CD4-positive, alpha-beta memory T cell (primary cell): ENCODE measurements at regions of chr1 and their contacts with region 1.

Region 1: DNA sequence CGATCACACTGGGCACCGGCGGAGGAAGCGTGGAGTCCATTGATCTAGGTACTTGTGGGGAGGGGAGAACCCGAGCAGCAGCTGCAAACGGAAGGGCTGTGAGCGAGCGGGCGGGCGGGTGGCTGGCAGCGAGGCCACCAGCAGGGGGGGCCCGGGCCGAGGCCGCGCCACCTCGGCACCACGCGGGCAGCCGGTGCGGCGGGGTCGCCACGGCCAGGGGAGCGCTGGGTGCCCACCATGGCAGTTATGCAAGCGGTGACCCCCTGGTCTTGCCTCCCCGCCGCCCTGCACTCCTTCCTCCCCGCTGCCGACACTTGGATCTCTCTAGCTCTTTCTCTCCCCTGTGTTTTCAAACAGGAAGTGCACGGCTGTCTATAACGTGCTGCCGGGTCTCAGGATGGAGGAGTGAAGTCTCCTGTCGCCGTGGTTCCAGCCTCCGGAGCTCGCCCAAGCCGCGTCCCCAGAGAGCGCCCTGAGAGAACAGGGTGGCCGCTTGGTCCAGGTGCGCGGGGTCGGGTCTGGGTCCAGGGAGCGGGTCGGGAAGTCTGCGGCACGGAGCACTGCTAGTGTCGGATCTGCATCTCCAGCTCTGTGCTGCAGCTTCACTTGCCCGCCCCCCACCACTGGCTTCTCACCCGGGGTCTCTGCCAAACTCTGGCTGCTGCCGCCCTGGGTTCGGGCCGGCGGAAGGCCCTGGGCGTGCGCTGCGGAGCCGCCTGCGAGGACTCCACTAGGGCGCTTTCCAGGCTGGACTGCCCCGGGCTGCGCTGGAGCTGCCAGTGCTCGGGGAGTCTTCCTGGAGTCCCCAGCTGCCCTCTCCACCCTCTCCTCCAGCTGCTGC is 22.7 kb downstream of the LRRC8D start:
- DNase-seq: peak; percentile 73 to 83 (median 79)
- H3K4me3 ChIP-seq: peak overlapping the region; percentile 87 to 89
- H3K4me3 Mint-ChIP-seq: peak overlapping the region; percentile 95 to 98 (median 97)
- H3K27ac ChIP-seq: peak overlapping the region; percentile 85
- H3K27ac Mint-ChIP-seq: peak overlapping the region; percentile 94 to 97 (median 97)
- H3K4me1 ChIP-seq: peaks cover 51% of the 10 kb centered on the region
- H3K4me1 Mint-ChIP-seq: peaks cover 30 to 81% (median 54%) of the 10 kb centered on the region in 4 donors
- H3K27me3 ChIP-seq: no peaks in the 10 kb centered on the region
- H3K27me3 Mint-ChIP-seq: no peaks in the 10 kb centered on the region

Region 2: DNA sequence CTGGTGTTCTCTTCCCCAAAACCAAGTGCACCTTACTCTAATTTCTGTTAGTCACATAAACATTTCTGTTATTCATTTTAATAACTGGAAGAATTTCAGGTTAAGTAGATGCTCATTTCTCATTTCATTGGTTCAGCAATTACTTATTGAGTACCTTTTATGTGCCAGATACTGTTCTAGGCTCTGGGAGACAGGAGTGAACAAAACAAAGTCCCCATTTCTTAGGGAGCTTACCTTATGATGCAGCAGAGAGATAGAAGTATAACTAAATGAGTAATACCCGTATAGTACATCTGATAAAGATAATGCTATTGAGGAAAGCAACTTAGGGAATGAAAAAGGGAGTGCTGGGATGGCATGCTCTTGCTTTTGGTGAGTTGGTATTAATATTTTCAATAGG is 176.9 kb before region 1 on chr1:
- CTCF ChIA-PET with region 1: no interaction called
- POLR2A ChIA-PET with region 1: no interaction called
- intact Hi-C with region 1: no loop called
- DNase-seq: no peak
- H3K4me3 ChIP-seq: no peak overlapping the region
- H3K4me3 Mint-ChIP-seq: peak overlapping the region in 5 of 8 donors; percentile 5 to 69 (median 52)
- H3K27ac ChIP-seq: no peak overlapping the region
- H3K27ac Mint-ChIP-seq: peak overlapping the region in 6 of 7 donors; percentile 11 to 80 (median 68)
- H3K4me1 ChIP-seq: peaks cover 76% of the 10 kb centered on the region
- H3K4me1 Mint-ChIP-seq: peaks cover 72 to 96% (median 80%) of the 10 kb centered on the region in 4 donors
- H3K27me3 ChIP-seq: no peaks in the 10 kb centered on the region
- H3K27me3 Mint-ChIP-seq: no peaks in the 10 kb centered on the region

Region 3: DNA sequence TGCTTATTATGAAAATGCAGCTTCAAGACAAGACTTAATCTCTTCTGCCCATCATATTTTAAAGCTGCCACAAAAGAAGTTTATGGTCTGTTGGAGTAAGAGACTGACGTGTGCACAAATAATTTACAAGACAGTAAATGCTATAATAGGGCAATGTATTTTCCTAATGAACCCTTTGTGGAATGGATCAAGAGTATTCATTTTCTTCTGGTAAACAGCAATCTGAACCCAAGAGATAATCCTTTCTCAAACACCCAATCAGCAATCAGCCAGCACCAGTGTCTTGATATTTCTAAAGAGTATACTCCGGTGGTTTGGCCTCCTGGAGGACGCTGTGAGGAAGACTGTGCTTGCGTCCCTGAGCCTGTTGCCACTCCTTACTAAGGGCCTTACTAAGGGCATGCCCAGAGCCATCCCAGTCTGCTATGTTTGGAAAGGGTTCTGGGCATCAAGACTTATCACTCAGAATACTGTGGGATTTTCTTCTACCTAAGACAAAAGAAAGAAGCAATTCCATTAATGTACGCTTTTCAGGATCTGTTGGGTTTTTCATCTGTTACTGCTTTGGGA is 71.4 kb before region 1 on chr1:
- CTCF ChIA-PET with region 1: no interaction called
- POLR2A ChIA-PET with region 1: no interaction called
- intact Hi-C with region 1: no loop called
- DNase-seq: no peak
- H3K4me3 ChIP-seq: no peak overlapping the region
- H3K4me3 Mint-ChIP-seq: no peak overlapping the region
- H3K27ac ChIP-seq: no peak overlapping the region
- H3K27ac Mint-ChIP-seq: no peak overlapping the region
- H3K4me1 ChIP-seq: peaks cover 11% of the 10 kb centered on the region
- H3K4me1 Mint-ChIP-seq: peaks cover 10 to 15% (median 12%) of the 10 kb centered on the region in 4 donors
- H3K27me3 ChIP-seq: no peaks in the 10 kb centered on the region
- H3K27me3 Mint-ChIP-seq: no peaks in the 10 kb centered on the region

Region 4: DNA sequence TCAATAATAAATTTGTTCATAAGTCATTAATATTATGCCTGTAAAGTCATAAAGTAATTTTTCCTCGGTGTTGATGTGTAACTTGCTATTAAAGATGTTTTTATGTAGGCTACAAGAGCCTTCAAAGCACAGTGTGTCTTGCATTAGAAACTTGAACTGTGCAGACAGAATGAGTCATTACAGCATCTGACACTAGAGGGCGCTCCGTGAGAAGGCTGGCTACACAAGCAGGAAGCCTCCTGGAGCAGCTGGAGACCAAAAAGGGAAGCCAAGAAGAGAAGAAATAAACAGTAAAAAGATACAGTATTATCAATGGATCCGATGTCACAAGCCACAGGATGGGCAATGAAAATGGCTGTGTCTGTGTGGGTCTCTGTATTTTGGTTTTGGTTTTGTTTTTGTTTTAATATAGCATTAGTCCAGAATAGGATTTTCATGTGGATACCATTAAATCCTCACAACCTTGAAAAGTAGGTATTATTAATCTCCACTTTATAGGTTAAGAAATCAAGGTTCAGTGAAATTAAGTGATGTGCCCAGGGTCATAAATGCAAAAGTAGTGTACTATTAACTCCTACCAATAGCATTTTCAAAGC is 38.8 kb before region 1 on chr1:
- CTCF ChIA-PET with region 1: interaction called, 7 read pairs
- POLR2A ChIA-PET with region 1: interaction called, 3 read pairs
- intact Hi-C with region 1: loop called (anchors 2 kb)
- DNase-seq: peak; percentile 73 to 81 (median 77)
- H3K4me3 ChIP-seq: no peak overlapping the region
- H3K4me3 Mint-ChIP-seq: no peak overlapping the region
- H3K27ac ChIP-seq: no peak overlapping the region
- H3K27ac Mint-ChIP-seq: no peak overlapping the region
- H3K4me1 ChIP-seq: peaks cover 4% of the 10 kb centered on the region
- H3K4me1 Mint-ChIP-seq: no peaks in the 10 kb centered on the region
- H3K27me3 ChIP-seq: no peaks in the 10 kb centered on the region
- H3K27me3 Mint-ChIP-seq: peaks cover 0 to 1% of the 10 kb centered on the region in 2 donors

Region 5: DNA sequence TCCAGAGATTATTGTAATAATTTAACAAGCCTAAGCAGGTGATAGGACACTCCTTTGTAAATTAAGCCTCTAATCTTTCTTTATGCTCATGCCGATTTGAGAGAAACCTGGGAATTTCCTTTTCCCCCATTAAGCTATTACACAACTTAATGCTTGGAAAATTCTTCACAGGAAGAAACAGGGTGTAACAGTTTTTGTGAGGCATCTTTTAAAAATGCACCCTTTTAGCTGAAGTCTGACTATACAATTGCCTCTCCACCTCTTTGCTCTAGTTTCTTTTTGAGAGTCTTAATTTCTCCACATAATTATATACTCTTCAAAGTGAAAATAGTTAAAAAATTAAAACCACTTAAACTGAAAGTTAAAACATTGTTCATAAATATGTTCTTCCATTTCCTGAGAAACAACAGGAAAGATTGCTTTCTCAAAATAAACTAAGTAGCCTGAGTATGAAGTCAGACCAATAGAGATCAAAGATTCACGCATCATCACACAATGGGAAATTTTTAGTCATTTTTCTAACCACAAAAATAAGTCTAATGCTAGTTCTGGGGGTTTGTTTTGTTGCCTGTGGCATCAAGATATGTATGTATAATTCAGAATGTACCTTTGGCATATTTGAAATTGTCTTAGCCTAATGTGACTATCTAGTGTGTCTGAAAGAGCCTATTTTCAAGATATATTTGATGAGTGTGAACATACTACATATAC is 12.1 kb after region 1 on chr1:
- CTCF ChIA-PET with region 1: interaction called, 39 read pairs
- POLR2A ChIA-PET with region 1: interaction called, 58 read pairs
- intact Hi-C with region 1: loop called (anchors 1 kb)
- DNase-seq: peak; percentile 65 to 82 (median 77)
- H3K4me3 ChIP-seq: peak overlapping the region in 1 of 2 donors; percentile 21
- H3K4me3 Mint-ChIP-seq: peak overlapping the region in 3 of 8 donors; percentile 74 to 82 (median 77)
- H3K27ac ChIP-seq: peak overlapping the region; percentile 65
- H3K27ac Mint-ChIP-seq: no peak overlapping the region
- H3K4me1 ChIP-seq: peaks cover 44% of the 10 kb centered on the region
- H3K4me1 Mint-ChIP-seq: peaks cover 11 to 22% (median 14%) of the 10 kb centered on the region in 4 donors
- H3K27me3 ChIP-seq: no peaks in the 10 kb centered on the region
- H3K27me3 Mint-ChIP-seq: peaks cover 0 to 1% of the 10 kb centered on the region in 2 donors

Region 6: DNA sequence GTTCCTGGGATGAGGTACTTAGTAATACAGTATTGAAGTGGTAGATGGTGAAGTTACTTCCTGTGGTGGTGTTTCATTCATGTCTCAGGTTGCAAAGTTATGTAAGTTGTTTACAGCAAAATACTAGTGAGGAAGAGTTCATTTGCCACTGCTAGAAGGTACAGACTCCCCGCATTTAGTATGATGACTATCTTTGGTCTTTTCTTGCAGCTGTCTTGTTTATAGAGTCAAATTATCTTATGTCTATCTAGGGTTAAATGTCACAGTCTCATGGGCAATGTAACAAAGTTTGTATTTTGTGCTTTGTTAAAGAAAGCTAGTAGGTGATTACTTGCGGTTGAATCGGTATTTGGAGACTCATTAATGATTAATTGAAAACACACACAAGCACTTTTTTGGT is 27.5 kb after region 1 on chr1:
- CTCF ChIA-PET with region 1: interaction called, 14 read pairs
- POLR2A ChIA-PET with region 1: interaction called, 25 read pairs
- intact Hi-C with region 1: loop called (anchors 2 kb)
- DNase-seq: peak in 4 of 5 donors; percentile 54 to 68 (median 60)
- H3K4me3 ChIP-seq: no peak overlapping the region
- H3K4me3 Mint-ChIP-seq: peak overlapping the region in 7 of 8 donors; percentile 18 to 76 (median 44)
- H3K27ac ChIP-seq: no peak overlapping the region
- H3K27ac Mint-ChIP-seq: peak overlapping the region; percentile 67 to 96 (median 94)
- H3K4me1 ChIP-seq: peaks cover 55% of the 10 kb centered on the region
- H3K4me1 Mint-ChIP-seq: peaks cover 49 to 79% (median 60%) of the 10 kb centered on the region in 4 donors
- H3K27me3 ChIP-seq: no peaks in the 10 kb centered on the region
- H3K27me3 Mint-ChIP-seq: no peaks in the 10 kb centered on the region

Region 7: DNA sequence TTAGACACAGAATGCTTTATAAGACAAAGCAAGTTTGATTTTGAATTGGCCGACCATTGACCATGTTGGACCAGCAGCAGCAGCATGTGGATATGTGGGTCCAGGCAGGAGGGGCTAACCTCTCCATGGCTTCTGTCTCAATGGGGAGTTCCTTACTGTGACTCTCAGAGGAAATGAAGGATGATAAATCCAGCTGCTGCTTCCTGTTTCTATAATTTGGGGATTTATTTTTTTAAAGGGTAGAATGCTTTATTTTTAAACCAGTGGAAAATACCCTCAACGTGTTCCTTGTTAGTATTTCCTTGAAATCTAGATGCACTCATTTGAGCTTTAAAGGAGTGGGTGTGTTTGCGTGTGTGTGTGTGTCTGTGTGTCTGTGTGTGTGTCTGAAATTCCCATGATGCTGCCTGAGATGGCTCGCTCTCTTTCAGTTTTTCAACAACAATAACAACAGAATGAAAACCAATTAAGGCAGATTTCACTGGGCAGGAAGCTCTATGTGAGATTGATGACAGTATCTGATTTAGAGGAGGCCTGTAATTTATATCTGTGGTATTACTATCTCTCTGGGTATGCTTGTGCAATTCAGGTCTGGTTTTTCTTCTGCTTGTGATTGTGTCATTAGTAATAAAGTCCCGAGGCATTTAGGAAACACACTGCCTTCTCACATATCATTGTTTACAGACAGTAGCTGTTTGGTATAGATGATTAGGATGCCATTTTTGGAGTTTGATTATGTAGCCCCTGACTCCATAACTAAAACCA is 65.4 kb after region 1 on chr1:
- CTCF ChIA-PET with region 1: interaction called, 4 read pairs
- POLR2A ChIA-PET with region 1: interaction called, 3 read pairs
- intact Hi-C with region 1: loop called (anchors 5 kb)
- DNase-seq: no peak
- H3K4me3 ChIP-seq: no peak overlapping the region
- H3K4me3 Mint-ChIP-seq: no peak overlapping the region
- H3K27ac ChIP-seq: no peak overlapping the region
- H3K27ac Mint-ChIP-seq: peak overlapping the region in 4 of 7 donors; percentile 11 to 71 (median 46)
- H3K4me1 ChIP-seq: peaks cover 16% of the 10 kb centered on the region
- H3K4me1 Mint-ChIP-seq: peaks cover 30 to 77% (median 60%) of the 10 kb centered on the region in 4 donors
- H3K27me3 ChIP-seq: no peaks in the 10 kb centered on the region
- H3K27me3 Mint-ChIP-seq: no peaks in the 10 kb centered on the region

Region 8: DNA sequence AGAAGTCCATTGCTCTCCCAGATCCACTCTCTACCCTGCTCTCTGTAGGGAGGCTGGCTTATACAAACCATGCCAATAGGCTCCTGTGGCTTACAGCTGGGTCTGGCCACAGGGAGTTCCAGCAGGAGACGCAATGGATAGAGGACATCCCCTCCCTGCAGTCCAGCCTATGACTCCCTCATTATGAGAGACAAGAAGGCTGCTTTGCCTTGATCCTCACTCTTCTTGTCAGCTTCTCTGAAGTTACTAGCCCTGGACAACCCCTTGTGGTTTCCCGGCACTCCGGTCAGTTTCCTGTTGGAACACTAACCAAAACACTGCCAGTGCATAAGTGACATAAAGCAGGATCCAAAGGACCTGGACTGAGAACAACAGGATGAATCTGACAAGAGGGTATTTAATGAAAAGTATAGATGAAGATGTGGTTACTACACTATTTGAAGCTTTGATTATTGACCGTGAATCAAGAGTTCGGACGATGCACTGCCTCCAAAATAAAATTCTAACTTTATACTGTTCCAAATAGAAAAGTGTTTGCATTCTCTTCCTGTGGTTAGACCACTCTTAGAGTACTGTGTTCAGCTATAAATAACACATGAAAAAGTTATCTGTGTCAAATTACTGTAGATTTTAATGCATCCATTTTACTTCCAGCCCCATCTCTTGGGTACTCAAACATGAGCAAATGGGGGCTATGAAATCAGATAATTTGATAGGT is 118.7 kb after region 1 on chr1:
- CTCF ChIA-PET with region 1: interaction called, 10 read pairs
- POLR2A ChIA-PET with region 1: interaction called, 3 read pairs
- intact Hi-C with region 1: loop called (anchors 10 kb)
- DNase-seq: no peak
- H3K4me3 ChIP-seq: no peak overlapping the region
- H3K4me3 Mint-ChIP-seq: no peak overlapping the region
- H3K27ac ChIP-seq: no peak overlapping the region
- H3K27ac Mint-ChIP-seq: no peak overlapping the region
- H3K4me1 ChIP-seq: peaks cover 8% of the 10 kb centered on the region
- H3K4me1 Mint-ChIP-seq: peaks cover under 1 to 6% (median 3%) of the 10 kb centered on the region in 4 donors
- H3K27me3 ChIP-seq: no peaks in the 10 kb centered on the region
- H3K27me3 Mint-ChIP-seq: peaks cover 0 to 5% of the 10 kb centered on the region in 2 donors

Region 9: GRCh38 chr1:89994805-89995597 is 151.5 kb after region 1 on chr1 and contains the start of gene ZNF326:
- CTCF ChIA-PET with region 1: interaction called, 5 read pairs
- POLR2A ChIA-PET with region 1: interaction called, 6 read pairs
- intact Hi-C with region 1: loop called (anchors 2 kb)
- DNase-seq: peak; percentile 89 to 96 (median 92)
- H3K4me3 ChIP-seq: peak within 1 kb of the TSS; percentile 77 to 95
- H3K4me3 Mint-ChIP-seq: peak within 1 kb of the TSS; percentile 92 to 100 (median 98)
- H3K27ac ChIP-seq: peak within 1 kb of the TSS; percentile 83
- H3K27ac Mint-ChIP-seq: peak within 1 kb of the TSS; percentile 87 to 99 (median 95)
- H3K4me1 ChIP-seq: peaks cover 36% of the 10 kb centered on the region
- H3K4me1 Mint-ChIP-seq: peaks cover 21 to 41% (median 31%) of the 10 kb centered on the region in 4 donors
- H3K27me3 ChIP-seq: no peaks in the 10 kb centered on the region
- H3K27me3 Mint-ChIP-seq: no peaks in the 10 kb centered on the region
- total RNA-seq, gene ZNF326: 17.4 to 20.6 TPM